Activated CD4-positive, alpha-beta T cell treated with anti-CD3 and anti-CD28 coated beads, Interleukin-2, amount 10 ng/mL, durations not matched to agents 24 days and 14 days (primary cell): ENCODE measurements at regions of chr1 and their contacts with region 1.

Region 1: GRCh38 chr1:100459358-100460114 is 78.4 kb upstream of the GPR88 start:
- DNase-seq: peak; percentile 89
- H3K4me3 Mint-ChIP-seq: no peak overlapping the region
- H3K27ac Mint-ChIP-seq: peak overlapping the region; percentile 22
- H3K4me1 Mint-ChIP-seq: peaks cover 34% of the 10 kb centered on the region
- H3K27me3 Mint-ChIP-seq: no peaks in the 10 kb centered on the region

Region 2: DNA sequence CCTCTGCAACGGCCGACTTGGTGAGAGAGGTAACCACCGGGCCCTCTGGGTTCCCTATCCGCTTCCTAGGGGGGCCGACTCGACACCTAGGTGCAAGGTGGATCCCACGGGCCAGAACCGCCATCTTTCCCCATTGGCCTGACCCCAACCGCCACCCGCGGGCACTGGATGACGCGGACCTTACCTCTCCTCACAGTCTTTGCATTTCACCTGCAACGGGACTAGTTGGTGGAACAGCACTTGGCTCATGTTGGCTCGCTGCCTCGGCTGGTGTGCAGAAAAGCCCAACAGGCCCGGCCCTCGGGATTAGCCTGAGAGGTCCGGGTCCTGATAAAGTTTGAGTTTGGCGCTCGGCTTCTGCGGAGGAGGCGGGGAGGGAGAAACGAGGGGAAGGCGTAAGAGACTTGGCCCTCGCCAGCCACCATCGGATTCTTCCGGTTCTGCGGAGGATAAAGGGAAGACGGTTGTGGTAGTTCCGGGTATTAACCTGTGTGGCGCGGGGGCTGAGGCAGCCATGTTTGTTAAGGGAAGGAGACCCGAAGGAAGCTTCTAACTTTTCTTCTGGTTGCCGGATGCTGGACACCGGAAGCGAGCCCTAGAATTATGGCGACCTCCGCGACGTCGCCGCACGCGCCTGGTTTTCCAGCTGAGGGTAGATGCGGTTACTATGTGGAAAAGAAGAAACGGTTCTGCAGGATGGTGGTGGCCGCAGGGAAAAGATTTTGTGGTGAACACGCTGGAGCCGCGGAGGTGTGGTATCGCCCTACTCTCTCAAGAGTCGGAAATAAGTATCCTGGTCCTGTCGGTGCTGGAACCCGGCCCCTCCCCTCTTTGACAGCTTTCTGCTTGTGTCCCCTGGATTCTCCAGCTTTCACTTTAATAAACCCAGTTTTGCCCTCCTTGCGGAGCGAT is 326.7 kb before region 1 on chr1 and contains the starts of genes SASS6 and TRMT13:
- intact Hi-C with region 1: loop called (anchors 1 kb)
- DNase-seq: peak; percentile 98
- H3K4me3 Mint-ChIP-seq: peak within 1 kb of the TSS; percentile 100
- H3K27ac Mint-ChIP-seq: peak within 1 kb of the TSS; percentile 97
- H3K4me1 Mint-ChIP-seq: peaks cover 38% of the 10 kb centered on the region
- H3K27me3 Mint-ChIP-seq: peaks cover 3% of the 10 kb centered on the region
- total RNA-seq, gene SASS6: 16.0 and 17.2 TPM in 2 replicates
- total RNA-seq, gene TRMT13: 24.3 and 25.5 TPM in 2 replicates

Region 3: GRCh38 chr1:100265931-100266740 is 193.4 kb before region 1 on chr1 and contains the start of gene RTCA:
- intact Hi-C with region 1: loop called (anchors 2 kb)
- DNase-seq: peak; percentile 99
- H3K4me3 Mint-ChIP-seq: peak within 1 kb of the TSS; percentile 98
- H3K27ac Mint-ChIP-seq: peak within 1 kb of the TSS; percentile 96
- H3K4me1 Mint-ChIP-seq: peaks cover 34% of the 10 kb centered on the region
- H3K27me3 Mint-ChIP-seq: no peaks in the 10 kb centered on the region
- total RNA-seq, gene RTCA: 48.5 and 49.1 TPM in 2 replicates

Region 4: GRCh38 chr1:100543640-100544039 is 84.1 kb after region 1 on chr1:
- intact Hi-C with region 1: loop called (anchors 5 kb)
- DNase-seq: peak; percentile 77
- H3K4me3 Mint-ChIP-seq: no peak overlapping the region
- H3K27ac Mint-ChIP-seq: no peak overlapping the region
- H3K4me1 Mint-ChIP-seq: peaks cover 2% of the 10 kb centered on the region
- H3K27me3 Mint-ChIP-seq: peaks cover 45% of the 10 kb centered on the region

Region 5: DNA sequence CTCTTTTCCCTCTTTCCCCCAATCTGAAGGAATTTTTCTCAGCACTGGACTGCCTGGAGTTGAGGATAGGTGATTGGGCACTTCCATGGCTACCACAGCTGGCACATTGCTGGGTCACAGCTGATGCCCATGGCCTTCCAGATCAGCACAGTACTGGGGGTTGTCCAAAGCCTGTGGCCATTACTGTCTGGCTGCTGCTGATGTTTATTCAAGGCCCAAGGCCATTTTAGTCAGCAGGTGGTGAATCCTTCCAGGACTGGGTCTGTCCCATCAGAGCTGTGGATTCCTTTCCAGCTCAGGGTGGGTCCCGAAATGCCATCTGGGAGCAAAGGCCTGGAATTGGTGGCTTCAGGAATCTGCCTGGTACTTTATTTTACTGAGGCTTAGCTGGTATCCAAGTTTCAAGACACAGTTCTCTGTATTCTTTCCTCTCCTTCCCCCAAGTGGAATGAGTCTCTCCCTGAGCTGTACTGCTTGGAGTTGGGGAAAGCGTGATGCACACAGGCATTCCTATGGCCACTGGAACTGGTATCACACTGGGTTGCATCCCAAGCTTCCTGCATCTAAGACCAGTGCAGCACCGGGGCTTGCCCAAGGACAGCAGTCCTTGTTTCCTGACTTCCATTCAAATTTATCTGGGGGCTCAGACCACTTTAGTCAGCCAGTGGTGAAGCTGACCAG is 97.5 kb after region 1 on chr1:
- intact Hi-C with region 1: no loop called
- DNase-seq: peak; percentile 32
- H3K4me3 Mint-ChIP-seq: no peak overlapping the region
- H3K27ac Mint-ChIP-seq: no peak overlapping the region
- H3K4me1 Mint-ChIP-seq: no peaks in the 10 kb centered on the region
- H3K27me3 Mint-ChIP-seq: peaks cover 11% of the 10 kb centered on the region

Region 6: GRCh38 chr1:101025657-101026504 is 566.3 kb after region 1 on chr1 and contains the start of gene DPH5:
- intact Hi-C with region 1: loop called (anchors 10 kb)
- DNase-seq: peak; percentile 97
- H3K4me3 Mint-ChIP-seq: peak within 1 kb of the TSS; percentile 100
- H3K27ac Mint-ChIP-seq: peak within 1 kb of the TSS; percentile 98
- H3K4me1 Mint-ChIP-seq: peaks cover 42% of the 10 kb centered on the region
- H3K27me3 Mint-ChIP-seq: no peaks in the 10 kb centered on the region
- total RNA-seq, gene DPH5: 37.5 and 41.0 TPM in 2 replicates